Activated CD4-positive, alpha-beta T cell treated with anti-CD3 and anti-CD28 coated beads for 36 hours (primary cell): ENCODE measurements at regions of chr17 and their contacts with region 1.

Region 1: GRCh38 chr17:77645072-77646045 is 313.1 kb upstream of the TNRC6C start:
- DNase-seq: peak; percentile 81
- ATAC-seq: peak; percentile 85
- H3K4me3 Mint-ChIP-seq: peak overlapping the region; percentile 59
- H3K27ac Mint-ChIP-seq: peak overlapping the region; percentile 92
- H3K4me1 Mint-ChIP-seq: peaks cover 20% of the 10 kb centered on the region
- H3K27me3 Mint-ChIP-seq: peaks cover 4% of the 10 kb centered on the region

Region 2: GRCh38 chr17:77542551-77543490 is 102.5 kb before region 1 on chr17:
- CTCF ChIA-PET with region 1: interaction called, 5 read pairs
- POLR2A ChIA-PET with region 1: no interaction called
- intact Hi-C with region 1: loop called (anchors 1 to 10 kb)
- DNase-seq: peak; percentile 83
- ATAC-seq: peak; percentile 90
- H3K4me3 Mint-ChIP-seq: no peak overlapping the region
- H3K27ac Mint-ChIP-seq: no peak overlapping the region
- H3K4me1 Mint-ChIP-seq: no peaks in the 10 kb centered on the region
- H3K27me3 Mint-ChIP-seq: peaks cover 3% of the 10 kb centered on the region

Region 3: GRCh38 chr17:77619851-77620250 is 25.5 kb before region 1 on chr17:
- CTCF ChIA-PET with region 1: no interaction called
- POLR2A ChIA-PET with region 1: no interaction called
- intact Hi-C with region 1: no loop called
- DNase-seq: no peak
- ATAC-seq: no peak
- H3K4me3 Mint-ChIP-seq: no peak overlapping the region
- H3K27ac Mint-ChIP-seq: no peak overlapping the region
- H3K4me1 Mint-ChIP-seq: peaks cover 11% of the 10 kb centered on the region
- H3K27me3 Mint-ChIP-seq: no peaks in the 10 kb centered on the region

Region 4: GRCh38 chr17:77634710-77635109 is 10.6 kb before region 1 on chr17:
- CTCF ChIA-PET with region 1: no interaction called
- POLR2A ChIA-PET with region 1: no interaction called
- intact Hi-C with region 1: loop called in 1 of 2 experiments (anchors 1 kb)
- DNase-seq: peak; percentile 81
- ATAC-seq: peak; percentile 97
- H3K4me3 Mint-ChIP-seq: no peak overlapping the region
- H3K27ac Mint-ChIP-seq: peak overlapping the region; percentile 82
- H3K4me1 Mint-ChIP-seq: peaks cover 20% of the 10 kb centered on the region
- H3K27me3 Mint-ChIP-seq: no peaks in the 10 kb centered on the region

Region 5: GRCh38 chr17:77842528-77843147 is 197.3 kb after region 1 on chr17:
- CTCF ChIA-PET with region 1: no interaction called
- POLR2A ChIA-PET with region 1: no interaction called
- intact Hi-C with region 1: loop called in 1 of 2 experiments (anchors 1 kb)
- DNase-seq: peak; percentile 65
- ATAC-seq: peak; percentile 63
- H3K4me3 Mint-ChIP-seq: peak overlapping the region; percentile 0
- H3K27ac Mint-ChIP-seq: peak overlapping the region; percentile 32
- H3K4me1 Mint-ChIP-seq: peaks cover 49% of the 10 kb centered on the region
- H3K27me3 Mint-ChIP-seq: peaks cover 5% of the 10 kb centered on the region